ENCODE measurements at regions of chr9 and their contacts with region 1.

Region 1: GRCh38 chr9:366620-367019 is 152.0 kb downstream of the DOCK8 start:
- DNase-seq: no peak
- H3K4me3 ChIP-seq: no peak overlapping the region
- H3K27ac ChIP-seq: no peak overlapping the region
- H3K4me1 ChIP-seq: no peaks in the 10 kb centered on the region
- H3K27me3 ChIP-seq: no peaks in the 10 kb centered on the region
- CTCF ChIP-seq: no peak
- EP300 ChIP-seq: no peak
- POLR2A ChIP-seq: no peak

Region 2: GRCh38 chr9:292914-293313 is 73.7 kb before region 1 on chr9:
- in situ Hi-C with region 1: no loop called
- intact Hi-C with region 1: no loop called
- DNase-seq: no peak
- H3K4me3 ChIP-seq: no peak overlapping the region
- H3K27ac ChIP-seq: no peak overlapping the region
- H3K4me1 ChIP-seq: peaks cover 0 to under 1% (median 0%) of the 10 kb centered on the region in 4 donors
- H3K27me3 ChIP-seq: no peaks in the 10 kb centered on the region
- CTCF ChIP-seq: no peak
- EP300 ChIP-seq: no peak
- POLR2A ChIP-seq: no peak

Region 3: DNA sequence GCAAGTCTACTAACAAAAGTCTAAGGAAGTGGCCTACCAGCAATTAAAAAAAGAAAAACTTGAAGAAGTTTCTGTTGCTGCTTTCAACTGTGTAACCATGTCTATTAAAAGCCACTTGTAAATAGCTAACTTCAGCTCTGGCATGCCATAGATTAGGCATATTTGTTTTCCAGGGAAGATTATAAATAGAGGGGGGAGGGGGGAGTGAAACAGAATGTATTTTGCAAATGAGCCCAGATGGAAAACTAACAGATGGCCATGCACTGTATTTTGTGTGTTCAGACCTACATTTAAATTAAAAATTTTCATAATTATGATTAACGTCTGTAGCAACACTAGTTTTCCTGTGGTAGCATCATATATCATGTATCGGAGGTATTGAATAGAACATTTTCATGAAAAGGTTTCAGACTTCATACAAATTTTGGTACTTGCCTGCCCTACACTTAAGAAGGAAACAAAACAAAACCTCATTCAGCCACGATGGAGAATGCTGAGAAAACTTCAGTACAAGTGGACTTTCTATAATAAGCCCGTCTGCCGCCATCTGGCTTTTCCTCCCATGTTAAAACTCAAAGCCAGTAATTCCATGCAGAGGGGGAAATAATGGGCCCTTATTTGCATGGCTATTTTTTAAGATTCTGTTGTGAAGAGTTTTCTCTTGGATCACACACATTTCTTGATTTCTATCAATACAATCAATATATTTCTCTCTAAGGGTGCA is 1428.1 kb after region 1 on chr9:
- in situ Hi-C with region 1: no loop called
- intact Hi-C with region 1: loop called (anchors 5 kb)
- DNase-seq: no peak
- H3K4me3 ChIP-seq: no peak overlapping the region
- H3K27ac ChIP-seq: no peak overlapping the region
- H3K4me1 ChIP-seq: no peaks in the 10 kb centered on the region
- H3K27me3 ChIP-seq: no peaks in the 10 kb centered on the region
- CTCF ChIP-seq: no peak
- EP300 ChIP-seq: no peak
- POLR2A ChIP-seq: no peak